ENCODE measurements at regions of chr3 and their contacts with region 1.

Region 1: DNA sequence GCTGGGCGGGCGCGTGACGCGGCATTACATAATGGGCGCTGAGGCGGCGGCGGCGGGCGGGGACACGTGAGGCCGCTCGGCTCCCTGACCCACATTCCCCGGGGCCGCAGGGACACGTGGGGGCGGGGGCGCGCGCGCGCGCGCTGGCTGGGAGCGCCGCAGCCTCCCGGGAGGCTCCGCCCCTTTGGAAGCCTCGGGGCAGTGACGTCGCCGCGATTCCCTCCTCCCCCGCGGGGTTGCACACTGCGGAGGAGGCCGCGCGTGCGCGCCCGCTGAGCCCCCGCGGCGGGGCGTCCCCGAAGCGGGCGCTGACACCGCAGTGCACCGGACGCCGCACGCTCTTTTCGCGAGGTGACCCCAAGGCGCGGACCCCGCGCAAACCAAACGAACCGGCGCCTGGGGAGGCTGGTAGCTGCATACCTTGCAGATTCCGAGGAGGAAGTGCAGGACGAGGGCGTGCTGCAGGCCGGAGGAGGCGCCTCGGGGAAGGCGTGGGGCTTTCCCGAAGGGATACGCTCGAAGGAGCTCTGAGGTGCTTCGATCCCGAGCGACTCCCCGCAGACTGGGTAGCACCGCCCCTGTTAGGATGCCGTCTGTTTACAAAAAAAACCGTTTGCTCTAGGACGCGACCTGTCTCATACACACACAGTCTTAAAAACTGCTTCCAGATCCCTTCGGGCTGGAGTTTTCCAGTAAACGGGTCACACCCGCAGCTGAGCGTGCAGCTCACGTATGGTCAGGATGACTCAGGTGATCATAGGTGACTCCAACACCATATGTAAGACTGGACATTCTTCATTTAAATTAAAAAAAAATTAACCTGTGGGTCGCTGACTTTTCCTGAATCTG is 1.0 kb downstream of the NR1D2 start:
- DNase-seq: peak; percentile 98
- ATAC-seq: peak; percentile 76
- H3K4me3 Mint-ChIP-seq: peak overlapping the region; percentile 80
- H3K27ac Mint-ChIP-seq: peak overlapping the region; percentile 93
- H3K4me1 Mint-ChIP-seq: peaks cover 43% of the 10 kb centered on the region
- H3K27me3 Mint-ChIP-seq: peaks cover 10% of the 10 kb centered on the region

Region 2: GRCh38 chr3:23805633-23806533 is 140.2 kb before region 1 on chr3 and contains the start of gene UBE2E1:
- CTCF ChIA-PET with region 1: no interaction called
- POLR2A ChIA-PET with region 1: no interaction called
- intact Hi-C with region 1: loop called in 1 of 2 experiments (anchors 1 kb)
- DNase-seq: peak; percentile 77
- ATAC-seq: peak; percentile 69
- H3K4me3 Mint-ChIP-seq: peak within 1 kb of the TSS; percentile 91
- H3K27ac Mint-ChIP-seq: peak within 1 kb of the TSS; percentile 89
- H3K4me1 Mint-ChIP-seq: peaks cover 36% of the 10 kb centered on the region
- H3K27me3 Mint-ChIP-seq: peaks cover 8% of the 10 kb centered on the region
- total RNA-seq, gene UBE2E1: 86.3 to 93.8 TPM

Region 3: DNA sequence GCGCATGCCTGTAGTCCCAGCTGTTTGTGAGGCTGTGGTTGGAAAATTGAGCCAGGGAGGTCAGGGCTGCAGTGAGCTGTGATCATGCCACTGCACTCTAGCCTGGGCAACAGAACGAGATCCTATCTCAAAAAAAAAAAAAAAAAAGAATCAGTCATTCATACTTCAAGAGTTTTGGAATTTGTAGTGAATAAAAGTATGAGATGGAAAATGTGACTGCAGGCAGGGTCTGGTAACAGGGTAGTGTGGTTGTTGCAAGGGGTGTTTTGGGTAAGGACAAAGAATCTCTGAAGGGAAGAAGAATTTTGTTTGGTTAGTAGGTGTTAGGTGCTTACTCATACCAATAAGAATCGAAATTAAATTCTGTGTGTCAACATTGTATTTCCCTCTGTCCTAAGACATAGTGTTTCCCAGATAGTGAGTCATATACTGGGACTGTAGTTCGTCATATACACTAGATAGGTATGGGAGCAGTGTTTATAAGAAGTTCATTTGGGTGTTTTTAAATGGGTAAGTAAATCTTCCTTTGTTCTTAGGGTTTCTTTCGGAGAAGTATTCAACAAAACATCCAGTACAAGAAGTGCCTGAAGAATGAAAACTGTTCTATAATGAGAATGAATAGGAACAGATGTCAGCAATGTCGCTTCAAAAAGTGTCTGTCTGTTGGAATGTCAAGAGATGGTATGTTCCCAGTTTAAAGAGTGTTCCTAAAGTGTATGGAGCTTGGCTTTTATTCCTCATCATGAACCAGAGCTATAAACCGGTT is 13.2 kb after region 1 on chr3:
- CTCF ChIA-PET with region 1: interaction called, 6 read pairs
- POLR2A ChIA-PET with region 1: interaction called, 3 read pairs
- intact Hi-C with region 1: loop called in 1 of 2 experiments (anchors 1 kb)
- DNase-seq: peak; percentile 44
- ATAC-seq: peak; percentile 92
- H3K4me3 Mint-ChIP-seq: no peak overlapping the region
- H3K27ac Mint-ChIP-seq: peak overlapping the region; percentile 62
- H3K4me1 Mint-ChIP-seq: peaks cover 34% of the 10 kb centered on the region
- H3K27me3 Mint-ChIP-seq: no peaks in the 10 kb centered on the region

Region 4: DNA sequence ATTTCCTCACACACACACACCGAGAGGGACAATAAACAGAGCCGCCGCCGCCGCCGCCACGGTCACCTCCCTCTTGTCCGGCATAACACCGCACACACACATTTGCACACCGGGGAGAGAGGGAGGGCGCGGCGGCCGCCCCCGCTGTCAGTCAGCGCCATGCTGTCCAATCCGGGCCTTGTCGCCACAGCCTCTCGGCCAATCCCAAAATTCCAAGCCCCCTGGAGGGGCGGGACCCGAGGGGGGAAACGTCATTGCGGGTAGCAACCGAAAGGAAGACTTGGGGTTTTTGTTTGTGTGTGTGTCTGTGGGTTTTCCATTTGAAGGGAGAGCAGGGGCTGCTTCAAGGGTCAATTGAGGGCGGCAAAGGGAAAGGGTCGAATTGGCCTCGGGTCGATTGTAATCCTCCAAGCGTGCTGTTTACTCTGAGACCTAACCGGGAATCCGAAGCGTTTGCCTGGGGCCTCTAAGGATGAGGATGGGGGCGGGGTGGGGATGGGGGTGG is 1718.7 kb after region 1 on chr3 and contains the start of gene TOP2B:
- CTCF ChIA-PET with region 1: no interaction called
- POLR2A ChIA-PET with region 1: no interaction called
- intact Hi-C with region 1: loop called in 1 of 2 experiments (anchors 10 kb)
- DNase-seq: peak; percentile 96
- ATAC-seq: peak; percentile 93
- H3K4me3 Mint-ChIP-seq: peak within 1 kb of the TSS; percentile 83
- H3K27ac Mint-ChIP-seq: peak within 1 kb of the TSS; percentile 100
- H3K4me1 Mint-ChIP-seq: peaks cover 44% of the 10 kb centered on the region
- H3K27me3 Mint-ChIP-seq: no peaks in the 10 kb centered on the region
- total RNA-seq, gene TOP2B: 132 to 156 TPM

Region 5: GRCh38 chr3:25789596-25790556 is 1843.7 kb after region 1 on chr3 and contains the start of gene OXSM:
- CTCF ChIA-PET with region 1: no interaction called
- POLR2A ChIA-PET with region 1: no interaction called
- intact Hi-C with region 1: loop called in 1 of 2 experiments (anchors 10 kb)
- DNase-seq: peak; percentile 97
- ATAC-seq: peak; percentile 89
- H3K4me3 Mint-ChIP-seq: peak within 1 kb of the TSS; percentile 92
- H3K27ac Mint-ChIP-seq: peak within 1 kb of the TSS; percentile 99
- H3K4me1 Mint-ChIP-seq: peaks cover 49% of the 10 kb centered on the region
- H3K27me3 Mint-ChIP-seq: no peaks in the 10 kb centered on the region
- total RNA-seq, gene OXSM: 12.4 to 18.1 TPM